Endothelial cell of umbilical vein (primary cell): ENCODE measurements at regions of chr2 and their contacts with region 1.

Region 1: DNA sequence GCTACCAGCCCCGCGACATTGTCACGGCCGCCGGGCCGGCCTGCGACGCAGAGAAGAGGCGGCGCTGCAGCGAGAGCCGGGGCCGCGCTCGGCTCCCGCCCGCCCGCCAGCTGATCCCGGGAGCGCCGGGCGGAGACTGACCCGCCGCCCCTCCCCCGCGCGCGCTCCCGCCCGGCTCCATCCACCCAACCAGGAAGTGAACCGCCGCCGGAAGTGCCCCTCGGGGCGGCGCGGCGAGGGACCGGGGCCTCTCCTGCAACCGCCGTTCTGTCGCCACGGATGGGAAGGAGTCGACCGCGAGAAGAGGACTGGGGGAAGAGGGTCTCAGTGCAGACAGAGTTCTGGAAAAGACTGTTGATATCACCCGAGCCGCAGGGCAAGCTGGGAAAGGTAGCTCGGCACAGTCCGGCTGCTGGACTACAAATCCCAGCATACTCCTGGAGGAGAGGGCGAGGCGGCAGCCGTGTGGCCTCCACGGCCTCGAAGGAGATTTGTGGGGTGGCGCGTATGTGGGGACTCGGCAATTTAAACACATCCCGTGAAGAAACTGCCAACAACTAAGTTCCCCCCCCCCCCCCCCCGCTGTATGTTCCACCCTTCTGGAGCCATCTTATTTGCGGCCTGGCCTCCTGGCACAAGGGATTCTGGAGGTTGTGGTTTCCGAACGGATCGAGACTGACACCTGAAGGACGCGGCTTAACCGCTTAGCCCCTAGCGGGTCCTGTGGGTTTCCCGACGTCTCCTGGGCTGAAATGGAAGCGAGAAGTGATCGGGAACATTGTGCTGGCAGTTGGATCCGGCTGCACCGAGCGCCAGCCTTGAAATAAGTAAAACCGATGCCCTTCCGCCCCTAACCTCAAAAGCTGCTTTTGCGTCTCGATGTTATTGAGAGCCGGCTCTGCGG is at the start of gene AAK1:
- DNase-seq: peak; percentile 93
- H3K4me3 ChIP-seq: peak within 1 kb of the TSS; percentile 86 to 97 (median 89)
- H3K27ac ChIP-seq: peak within 1 kb of the TSS; percentile 88
- H3K4me1 ChIP-seq: peaks cover 35% of the 10 kb centered on the region
- H3K27me3 ChIP-seq: no peaks in the 10 kb centered on the region
- CTCF ChIP-seq: no peak
- POLR2A ChIP-seq: peak; percentile 62
- total RNA-seq, gene AAK1: 116 and 127 TPM in 2 replicates

Region 2: DNA sequence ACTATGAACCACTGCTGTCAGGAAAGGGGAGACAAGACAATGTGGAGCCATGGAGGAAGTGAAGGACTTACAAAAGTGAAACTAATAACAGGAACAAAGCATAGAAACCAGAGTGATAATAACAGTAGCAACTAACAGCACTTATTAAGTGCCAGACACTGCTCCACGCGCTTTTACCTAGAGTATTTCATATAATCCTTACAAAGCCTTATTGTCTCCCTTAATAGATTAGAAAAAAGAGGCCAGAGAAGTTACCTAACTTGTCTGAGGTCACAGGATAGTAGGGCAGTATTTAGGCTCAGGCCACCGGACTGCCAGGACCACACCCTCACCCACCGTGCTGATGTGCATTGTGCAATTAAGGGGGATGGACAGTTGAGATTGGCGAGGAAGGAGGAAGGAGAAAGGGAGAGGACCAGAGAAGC is 108.0 kb before region 1 on chr2:
- CTCF ChIA-PET with region 1: no interaction called
- POLR2A ChIA-PET with region 1: no interaction called
- dilution Hi-C with region 1: no loop called
- intact Hi-C with region 1: no loop called
- DNase-seq: no peak
- H3K4me3 ChIP-seq: no peak overlapping the region
- H3K27ac ChIP-seq: no peak overlapping the region
- H3K4me1 ChIP-seq: no peaks in the 10 kb centered on the region
- H3K27me3 ChIP-seq: no peaks in the 10 kb centered on the region
- CTCF ChIP-seq: no peak
- POLR2A ChIP-seq: no peak

Region 3: GRCh38 chr2:69559442-69560146 is 84.3 kb before region 1 on chr2:
- CTCF ChIA-PET with region 1: interaction called, 24 read pairs
- POLR2A ChIA-PET with region 1: no interaction called
- dilution Hi-C with region 1: no loop called
- intact Hi-C with region 1: loop called (anchors 1 kb)
- DNase-seq: peak; percentile 69
- H3K4me3 ChIP-seq: no peak overlapping the region
- H3K27ac ChIP-seq: no peak overlapping the region
- H3K4me1 ChIP-seq: peaks cover 21% of the 10 kb centered on the region
- H3K27me3 ChIP-seq: no peaks in the 10 kb centered on the region
- CTCF ChIP-seq: peak; percentile 50 to 51
- POLR2A ChIP-seq: no peak

Region 4: DNA sequence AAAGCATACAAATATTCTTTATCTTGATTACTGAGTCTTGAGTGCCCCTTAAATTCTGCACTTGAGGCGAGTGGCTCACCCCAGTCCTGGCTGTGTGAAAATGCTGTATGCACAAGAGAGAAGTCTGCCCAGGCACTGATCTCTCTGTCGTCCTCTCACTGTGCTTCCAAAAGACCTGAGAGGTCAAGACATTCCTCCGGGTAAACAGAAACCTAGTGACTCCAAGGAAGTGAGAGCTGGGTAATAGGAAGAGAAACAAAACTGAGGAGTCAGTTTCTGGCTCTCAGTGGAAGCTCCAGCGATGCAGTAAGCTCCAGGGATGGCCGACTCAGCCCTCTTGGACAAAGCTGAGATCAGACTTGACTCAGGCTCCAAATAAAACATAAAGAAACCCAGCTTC is 71.2 kb before region 1 on chr2:
- CTCF ChIA-PET with region 1: interaction called, 3 read pairs
- POLR2A ChIA-PET with region 1: interaction called, 10 read pairs
- dilution Hi-C with region 1: no loop called
- intact Hi-C with region 1: no loop called
- DNase-seq: peak; percentile 16
- H3K4me3 ChIP-seq: no peak overlapping the region
- H3K27ac ChIP-seq: no peak overlapping the region
- H3K4me1 ChIP-seq: peaks cover 2% of the 10 kb centered on the region
- H3K27me3 ChIP-seq: no peaks in the 10 kb centered on the region
- CTCF ChIP-seq: no peak
- POLR2A ChIP-seq: no peak

Region 5: GRCh38 chr2:69683101-69683971 is 39.5 kb after region 1 on chr2:
- CTCF ChIA-PET with region 1: interaction called, 19 read pairs
- POLR2A ChIA-PET with region 1: interaction called, 10 read pairs
- dilution Hi-C with region 1: no loop called
- intact Hi-C with region 1: loop called (anchors 1 kb)
- DNase-seq: peak; percentile 98
- H3K4me3 ChIP-seq: peak overlapping the region in 1 of 3 experiments; percentile 39
- H3K27ac ChIP-seq: peak overlapping the region; percentile 87
- H3K4me1 ChIP-seq: peaks cover 36% of the 10 kb centered on the region
- H3K27me3 ChIP-seq: no peaks in the 10 kb centered on the region
- CTCF ChIP-seq: no peak
- POLR2A ChIP-seq: peak; percentile 80

Region 6: DNA sequence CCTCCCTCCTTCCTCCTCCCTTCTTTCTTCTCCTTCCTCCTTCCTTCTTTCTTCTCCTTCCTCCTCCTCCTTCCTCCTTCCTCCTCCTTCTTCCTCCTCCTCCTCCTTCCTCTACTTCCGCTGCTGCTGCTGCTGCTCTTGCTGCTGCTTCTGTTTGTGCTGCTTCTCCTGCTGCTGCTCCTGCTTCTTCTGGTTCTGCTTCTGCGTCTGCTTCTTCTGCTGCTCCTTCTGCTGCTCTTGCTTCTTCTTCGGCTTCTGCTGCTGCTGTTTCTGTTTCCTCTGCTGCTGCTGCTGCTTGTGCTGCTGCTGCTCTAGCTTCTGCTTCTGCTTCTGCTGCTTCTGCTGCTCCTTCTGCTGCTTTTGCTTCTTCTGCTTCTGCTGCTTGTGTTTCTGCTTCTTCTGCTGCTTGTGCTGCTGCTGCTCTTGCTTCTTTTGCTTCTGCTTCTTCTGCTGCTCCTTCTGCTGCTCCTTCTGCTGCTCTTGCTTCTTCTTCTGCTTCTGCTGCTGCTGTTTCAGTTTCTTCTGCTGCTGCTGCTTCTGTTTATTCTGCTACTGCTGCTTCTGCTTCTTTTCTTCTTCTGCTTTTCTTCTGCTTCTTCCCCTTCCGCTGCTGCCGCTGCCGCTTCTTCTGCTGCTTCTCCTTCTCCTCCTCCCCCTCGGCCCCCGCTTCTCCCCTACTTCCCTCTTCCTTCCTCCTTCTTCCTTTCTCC is 258.5 kb after region 1 on chr2:
- CTCF ChIA-PET with region 1: no interaction called
- POLR2A ChIA-PET with region 1: no interaction called
- dilution Hi-C with region 1: no loop called
- intact Hi-C with region 1: no loop called
- DNase-seq: no peak
- H3K4me3 ChIP-seq: no peak overlapping the region
- H3K27ac ChIP-seq: no peak overlapping the region
- H3K4me1 ChIP-seq: no peaks in the 10 kb centered on the region
- H3K27me3 ChIP-seq: no peaks in the 10 kb centered on the region
- CTCF ChIP-seq: no peak
- POLR2A ChIP-seq: no peak